CD4-positive, alpha-beta memory T cell (primary cell): ENCODE measurements at regions of chr16 and their contacts with region 1.

Region 1: DNA sequence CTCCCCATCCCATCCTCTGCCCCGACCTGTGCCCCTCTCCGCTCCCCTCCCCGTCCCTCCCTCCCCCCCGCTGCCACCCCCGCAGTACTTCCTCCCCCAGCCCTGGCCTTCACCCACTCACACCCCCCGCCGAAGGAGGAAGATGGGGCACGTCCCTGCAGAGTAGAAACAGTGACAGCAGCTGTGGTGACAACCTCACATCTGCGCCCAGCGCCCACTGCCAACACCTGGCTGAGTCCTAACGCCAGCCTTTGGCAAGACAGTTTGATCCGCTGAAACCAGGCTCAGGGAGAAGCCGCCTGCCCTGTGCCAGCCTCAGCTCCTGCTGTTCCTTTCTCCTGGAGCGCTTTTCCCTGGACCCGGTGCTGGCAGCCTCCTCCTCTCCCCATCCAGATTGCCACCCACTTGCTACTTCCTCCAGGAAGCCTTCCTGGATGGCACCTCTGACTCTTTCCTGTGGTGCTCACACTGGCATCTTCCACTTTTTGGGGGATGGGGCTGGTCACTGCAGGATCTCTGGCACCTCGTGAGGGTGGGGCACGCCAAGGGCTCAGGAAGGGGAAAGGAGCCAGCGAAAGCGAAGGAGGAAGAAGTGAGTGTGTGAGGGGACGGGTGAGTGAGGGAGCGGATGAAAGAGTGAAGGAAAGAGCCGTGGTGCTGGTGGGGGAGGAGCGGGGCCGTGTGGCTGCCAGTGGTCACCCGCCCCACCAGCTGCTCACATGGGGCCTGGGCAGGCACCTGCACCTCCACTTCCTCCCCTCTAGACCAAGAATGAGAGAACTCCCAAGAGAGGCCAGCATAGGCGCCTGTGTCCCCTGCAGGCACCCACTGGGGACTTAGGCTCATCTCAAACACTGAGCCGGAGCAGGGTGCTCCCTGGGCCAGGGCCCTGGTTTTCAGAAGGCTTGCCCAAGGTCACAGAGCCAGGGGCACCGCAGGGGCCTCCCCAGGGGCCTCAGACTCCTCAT is 27.0 kb downstream of the ZFPM1 start:
- DNase-seq: peak in 3 of 5 donors; percentile 38 to 60 (median 50)
- H3K4me3 ChIP-seq: no peak overlapping the region
- H3K4me3 Mint-ChIP-seq: peak overlapping the region in 5 of 8 donors; percentile 21 to 68 (median 46)
- H3K27ac ChIP-seq: no peak overlapping the region
- H3K27ac Mint-ChIP-seq: peak overlapping the region in 6 of 7 donors; percentile 48 to 90 (median 84)
- H3K4me1 ChIP-seq: peaks cover 48% of the 10 kb centered on the region
- H3K4me1 Mint-ChIP-seq: peaks cover 19 to 56% (median 39%) of the 10 kb centered on the region in 4 donors
- H3K27me3 ChIP-seq: no peaks in the 10 kb centered on the region
- H3K27me3 Mint-ChIP-seq: no peaks in the 10 kb centered on the region

Region 2: GRCh38 chr16:88331989-88332920 is 147.8 kb before region 1 on chr16:
- CTCF ChIA-PET with region 1: no interaction called
- POLR2A ChIA-PET with region 1: no interaction called
- intact Hi-C with region 1: no loop called
- DNase-seq: no peak
- H3K4me3 ChIP-seq: no peak overlapping the region
- H3K4me3 Mint-ChIP-seq: no peak overlapping the region
- H3K27ac ChIP-seq: no peak overlapping the region
- H3K27ac Mint-ChIP-seq: no peak overlapping the region
- H3K4me1 ChIP-seq: no peaks in the 10 kb centered on the region
- H3K4me1 Mint-ChIP-seq: peaks cover 0 to 5% (median 1%) of the 10 kb centered on the region in 4 donors
- H3K27me3 ChIP-seq: no peaks in the 10 kb centered on the region
- H3K27me3 Mint-ChIP-seq: peaks cover 0 to 5% of the 10 kb centered on the region in 2 donors

Region 3: GRCh38 chr16:88527186-88527936 is 47.3 kb after region 1 on chr16:
- CTCF ChIA-PET with region 1: no interaction called
- POLR2A ChIA-PET with region 1: no interaction called
- intact Hi-C with region 1: loop called (anchors 5 kb)
- DNase-seq: peak in 4 of 5 donors; percentile 46 to 70 (median 56)
- H3K4me3 ChIP-seq: no peak overlapping the region
- H3K4me3 Mint-ChIP-seq: no peak overlapping the region
- H3K27ac ChIP-seq: no peak overlapping the region
- H3K27ac Mint-ChIP-seq: no peak overlapping the region
- H3K4me1 ChIP-seq: no peaks in the 10 kb centered on the region
- H3K4me1 Mint-ChIP-seq: peaks cover 2 to 14% (median 4%) of the 10 kb centered on the region in 4 donors
- H3K27me3 ChIP-seq: no peaks in the 10 kb centered on the region
- H3K27me3 Mint-ChIP-seq: no peaks in the 10 kb centered on the region